ENCODE measurements at regions of chr2 and their contacts with region 1.

Region 1: GRCh38 chr2:176126929-176127773 is 2.4 kb upstream of the HOXD8 start:
- DNase-seq: peak; percentile 74 to 87
- H3K4me3 ChIP-seq: no peak overlapping the region
- H3K27ac ChIP-seq: no peak overlapping the region
- H3K4me1 ChIP-seq: peaks cover 28 to 57% (median 42%) of the 10 kb centered on the region in 4 donors
- H3K27me3 ChIP-seq: peaks cover 57 to 100% (median 93%) of the 10 kb centered on the region in 3 donors
- CTCF ChIP-seq: peak in 5 of 7 experiments; percentile 62 to 97 (median 87)
- EP300 ChIP-seq: no peak
- POLR2A ChIP-seq: no peak

Region 2: DNA sequence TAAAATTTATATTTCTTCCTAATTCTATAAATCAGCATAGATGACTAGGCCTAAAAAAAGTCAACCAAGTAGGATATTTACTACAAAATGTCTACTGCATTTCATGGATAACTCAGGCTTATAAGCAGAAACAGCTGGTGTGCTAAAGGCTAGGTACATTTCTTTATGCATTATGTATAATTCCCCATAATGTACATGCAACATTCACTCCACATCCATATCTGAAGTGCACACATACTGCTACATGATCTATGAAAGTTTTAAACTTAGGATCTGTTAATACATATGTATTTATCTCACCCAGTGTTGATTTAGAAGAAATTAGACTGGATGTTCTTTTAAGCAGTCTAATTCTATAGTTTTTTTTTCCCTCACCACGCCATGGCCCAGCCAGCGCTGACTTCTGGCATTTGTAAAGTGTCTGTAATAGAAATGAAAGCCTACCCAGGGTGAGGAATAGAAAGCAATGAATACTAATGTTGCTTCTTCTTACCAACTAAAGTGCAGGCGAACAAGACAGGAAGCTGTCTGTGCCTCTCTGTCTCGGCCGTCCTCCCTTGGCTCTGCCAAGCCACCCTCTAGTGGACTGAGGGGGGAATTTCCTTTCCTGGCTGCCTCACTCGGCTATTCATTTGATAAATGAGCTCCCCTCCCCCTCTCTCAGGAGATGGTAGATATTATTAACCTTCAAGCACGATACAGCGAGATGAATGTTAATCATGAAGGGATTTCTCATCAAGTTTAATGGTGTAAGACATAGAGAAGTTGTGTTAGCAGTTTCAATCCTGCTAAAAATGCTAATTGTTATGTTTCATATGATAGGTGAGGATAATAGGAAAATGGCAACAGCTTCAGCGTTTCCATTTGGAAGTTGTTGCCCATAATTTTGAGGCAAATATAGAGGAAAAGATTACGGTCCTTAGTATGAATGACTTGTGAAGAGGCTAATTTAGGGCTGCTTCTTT is 526.6 kb after region 1 on chr2:
- intact Hi-C with region 1: loop called (anchors 10 kb)
- DNase-seq: peak; percentile 39 to 77
- H3K4me3 ChIP-seq: no peak overlapping the region
- H3K27ac ChIP-seq: no peak overlapping the region
- H3K4me1 ChIP-seq: no peaks in the 10 kb centered on the region
- H3K27me3 ChIP-seq: peaks cover 0 to 47% (median 11%) of the 10 kb centered on the region in 3 donors
- CTCF ChIP-seq: peak in 4 of 7 experiments; percentile 39 to 46 (median 44)
- EP300 ChIP-seq: no peak
- POLR2A ChIP-seq: no peak

Region 3: DNA sequence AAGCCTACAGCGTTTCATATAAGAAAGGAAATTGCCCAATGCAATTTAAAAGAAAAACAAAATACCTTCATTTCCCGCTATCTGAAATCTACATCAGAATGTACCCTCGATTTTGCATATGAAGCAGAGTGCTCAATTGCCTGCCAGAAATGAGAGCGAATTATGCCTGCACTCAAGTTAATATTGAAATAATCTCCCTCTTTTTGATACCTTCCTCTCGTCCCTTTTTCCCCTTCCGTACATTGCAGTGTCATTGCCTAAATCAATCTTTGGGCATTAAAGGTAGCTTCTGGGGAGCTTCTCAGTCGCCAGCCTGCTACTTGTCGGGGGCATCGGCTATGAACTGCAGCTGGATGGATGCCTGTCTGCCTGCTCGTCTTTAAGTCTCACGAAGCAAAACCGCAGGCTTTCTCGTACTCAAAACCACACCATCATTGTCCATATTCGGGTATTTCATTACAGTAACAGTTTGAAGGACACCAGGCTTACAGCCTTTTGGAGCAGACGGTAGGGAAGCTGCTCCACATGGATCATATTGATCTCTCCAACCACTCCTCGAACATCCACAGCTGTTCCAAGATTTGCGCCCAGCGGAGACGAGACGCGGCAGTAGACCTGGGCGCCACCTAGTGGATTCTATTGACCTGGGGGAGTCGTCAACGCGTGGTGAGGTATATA is 1021.5 kb after region 1 on chr2:
- intact Hi-C with region 1: loop called (anchors 5 kb)
- DNase-seq: peak; percentile 80 to 92
- H3K4me3 ChIP-seq: peak overlapping the region; percentile 29 to 51 (median 41)
- H3K27ac ChIP-seq: no peak overlapping the region
- H3K4me1 ChIP-seq: peaks cover 0 to 14% (median 11%) of the 10 kb centered on the region in 4 donors
- H3K27me3 ChIP-seq: peaks cover 0 to 56% (median 8%) of the 10 kb centered on the region in 3 donors
- CTCF ChIP-seq: peak in 5 of 7 experiments; percentile 38 to 72 (median 64)
- EP300 ChIP-seq: no peak
- POLR2A ChIP-seq: no peak